Activated CD4-positive, alpha-beta memory T cell treated with anti-CD3 and anti-CD28 coated beads, Interleukin-2, amount 10 ng/mL, durations not matched to agents 7 days and 5 days (primary cell): ENCODE measurements at regions of chr14 and their contacts with region 1.

Region 1: GRCh38 chr14:61252369-61253063 is 28.6 kb downstream of the TMEM30B start:
- DNase-seq: peak; percentile 77
- H3K4me3 Mint-ChIP-seq: no peak overlapping the region
- H3K27ac Mint-ChIP-seq: no peak overlapping the region
- H3K4me1 Mint-ChIP-seq: peaks cover 30% of the 10 kb centered on the region
- H3K27me3 Mint-ChIP-seq: peaks cover 8% of the 10 kb centered on the region

Region 2: DNA sequence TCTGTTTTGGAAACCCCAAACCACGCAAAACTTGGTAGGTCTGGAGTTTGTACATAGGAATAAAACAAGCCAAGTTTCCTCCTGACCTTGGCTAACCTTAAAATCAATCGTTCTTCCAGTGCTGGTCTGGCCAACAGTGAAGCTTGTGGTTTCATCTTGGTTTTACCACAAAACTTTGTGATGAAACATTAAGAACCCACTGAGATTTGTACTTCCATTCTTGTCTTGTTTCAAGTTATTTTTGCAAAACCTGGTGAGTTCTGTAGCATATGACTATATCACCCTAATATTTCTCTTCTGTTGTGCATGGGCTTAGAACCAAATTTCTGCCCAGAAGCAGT is 629.6 kb before region 1 on chr14:
- CTCF ChIA-PET with region 1: interaction called, 34 read pairs
- POLR2A ChIA-PET with region 1: no interaction called
- DNase-seq: no peak
- H3K4me3 Mint-ChIP-seq: no peak overlapping the region
- H3K27ac Mint-ChIP-seq: no peak overlapping the region
- H3K4me1 Mint-ChIP-seq: peaks cover 12% of the 10 kb centered on the region
- H3K27me3 Mint-ChIP-seq: peaks cover 33% of the 10 kb centered on the region

Region 3: GRCh38 chr14:61229475-61229888 is 23.0 kb before region 1 on chr14:
- CTCF ChIA-PET with region 1: no interaction called
- POLR2A ChIA-PET with region 1: no interaction called
- DNase-seq: no peak
- H3K4me3 Mint-ChIP-seq: no peak overlapping the region
- H3K27ac Mint-ChIP-seq: no peak overlapping the region
- H3K4me1 Mint-ChIP-seq: peaks cover 18% of the 10 kb centered on the region
- H3K27me3 Mint-ChIP-seq: peaks cover 12% of the 10 kb centered on the region

Region 4: GRCh38 chr14:61308198-61308597 is 55.7 kb after region 1 on chr14:
- CTCF ChIA-PET with region 1: no interaction called
- POLR2A ChIA-PET with region 1: no interaction called
- DNase-seq: no peak
- H3K4me3 Mint-ChIP-seq: no peak overlapping the region
- H3K27ac Mint-ChIP-seq: no peak overlapping the region
- H3K4me1 Mint-ChIP-seq: peaks cover 5% of the 10 kb centered on the region
- H3K27me3 Mint-ChIP-seq: no peaks in the 10 kb centered on the region

Region 5: GRCh38 chr14:61344437-61345150 is 92.1 kb after region 1 on chr14:
- CTCF ChIA-PET with region 1: no interaction called
- POLR2A ChIA-PET with region 1: no interaction called
- DNase-seq: no peak
- H3K4me3 Mint-ChIP-seq: peak overlapping the region; percentile 68
- H3K27ac Mint-ChIP-seq: peak overlapping the region; percentile 95
- H3K4me1 Mint-ChIP-seq: peaks cover 96% of the 10 kb centered on the region
- H3K27me3 Mint-ChIP-seq: no peaks in the 10 kb centered on the region